ENCODE measurements at regions of chr12 and their contacts with region 1.

Region 1: DNA sequence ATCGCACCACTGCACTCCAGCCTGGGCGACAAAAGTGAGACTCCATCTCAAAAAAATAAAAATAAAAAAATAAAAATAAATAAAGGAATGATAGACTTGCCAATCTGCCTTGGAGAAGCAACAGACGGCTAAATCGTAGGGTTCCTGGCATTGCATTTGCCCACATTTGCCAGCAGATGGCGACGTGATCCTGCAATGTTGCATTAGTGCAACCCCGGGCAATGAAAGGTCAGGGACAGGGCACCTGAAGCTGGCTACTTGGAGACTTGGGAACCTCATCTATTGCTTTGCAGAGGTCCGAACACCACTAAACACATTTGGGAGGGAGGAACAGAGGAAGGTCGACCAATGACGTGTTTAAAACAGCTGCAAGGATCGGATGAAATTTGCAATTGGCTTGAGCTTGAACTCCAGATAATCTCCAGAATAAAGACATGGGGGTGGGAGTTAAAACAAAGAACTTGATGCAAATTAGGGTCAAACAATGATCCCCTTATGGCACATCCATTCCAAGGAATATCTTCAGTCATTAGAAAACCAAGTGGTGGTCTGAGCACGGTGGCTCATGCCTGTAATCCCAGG is 34.6 kb downstream of the SPRING1 start:
- DNase-seq: peak; percentile 26 to 80 (median 68)
- ATAC-seq: peak; percentile 71
- H3K4me3 ChIP-seq: no peak overlapping the region
- H3K4me3 Mint-ChIP-seq: no peak overlapping the region
- H3K27ac ChIP-seq: no peak overlapping the region
- H3K27ac Mint-ChIP-seq: no peak overlapping the region
- H3K4me1 ChIP-seq: no peaks in the 10 kb centered on the region
- H3K4me1 Mint-ChIP-seq: peaks cover 2% of the 10 kb centered on the region
- H3K27me3 ChIP-seq: peaks cover 0 to 2% of the 10 kb centered on the region in 2 experiments
- H3K27me3 Mint-ChIP-seq: peaks cover 6% of the 10 kb centered on the region
- CTCF ChIP-seq: peak; percentile 96

Region 2: GRCh38 chr12:116717466-116718437 is 14.4 kb after region 1 on chr12:
- CTCF ChIA-PET with region 1: interaction called, 21 read pairs
- POLR2A ChIA-PET with region 1: no interaction called
- intact Hi-C with region 1: no loop called
- DNase-seq: no peak
- ATAC-seq: no peak
- H3K4me3 ChIP-seq: no peak overlapping the region
- H3K4me3 Mint-ChIP-seq: no peak overlapping the region
- H3K27ac ChIP-seq: no peak overlapping the region
- H3K27ac Mint-ChIP-seq: no peak overlapping the region
- H3K4me1 ChIP-seq: no peaks in the 10 kb centered on the region
- H3K4me1 Mint-ChIP-seq: peaks cover 3% of the 10 kb centered on the region
- H3K27me3 ChIP-seq: no peaks in the 10 kb centered on the region
- H3K27me3 Mint-ChIP-seq: no peaks in the 10 kb centered on the region
- CTCF ChIP-seq: no peak

Region 3: DNA sequence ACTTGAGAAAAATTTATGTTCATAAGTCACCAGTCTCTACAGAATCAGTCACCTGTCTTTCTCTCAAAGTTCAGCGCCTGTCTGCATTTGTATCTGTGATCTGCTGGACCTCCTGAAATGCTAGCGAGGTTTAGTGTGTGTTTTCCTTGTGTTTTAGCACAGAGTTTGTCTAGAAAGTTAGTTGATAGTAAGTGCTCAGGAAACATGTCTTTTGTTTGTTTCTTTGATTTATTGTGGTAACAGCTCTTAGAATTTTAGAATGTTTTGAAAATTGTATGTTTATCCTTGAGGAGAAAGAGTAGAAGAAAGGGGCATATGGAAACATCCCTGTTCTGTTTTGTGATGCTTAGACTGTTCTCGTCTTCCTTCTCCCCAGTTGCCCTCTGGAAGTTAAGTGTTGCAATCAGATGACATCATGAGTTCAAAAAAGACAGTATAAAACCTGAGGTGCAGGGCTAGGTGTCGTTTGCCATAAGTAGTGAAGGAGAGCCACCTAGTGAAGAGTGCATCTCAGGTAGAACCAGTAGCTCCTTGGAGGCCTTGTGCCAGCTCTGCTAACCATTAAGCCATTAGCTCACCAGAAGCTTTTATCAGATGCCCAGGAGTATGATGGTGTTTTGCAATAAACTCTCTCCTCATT is 252.2 kb after region 1 on chr12:
- CTCF ChIA-PET with region 1: interaction called, 18 read pairs
- POLR2A ChIA-PET with region 1: interaction called, 4 read pairs
- intact Hi-C with region 1: loop called (anchors 1 to 2 kb)
- DNase-seq: peak in 3 of 9 experiments; percentile 9 to 66 (median 52)
- ATAC-seq: no peak
- H3K4me3 ChIP-seq: no peak overlapping the region
- H3K4me3 Mint-ChIP-seq: no peak overlapping the region
- H3K27ac ChIP-seq: no peak overlapping the region
- H3K27ac Mint-ChIP-seq: no peak overlapping the region
- H3K4me1 ChIP-seq: no peaks in the 10 kb centered on the region
- H3K4me1 Mint-ChIP-seq: no peaks in the 10 kb centered on the region
- H3K27me3 ChIP-seq: no peaks in the 10 kb centered on the region
- H3K27me3 Mint-ChIP-seq: no peaks in the 10 kb centered on the region
- CTCF ChIP-seq: no peak

Region 4: DNA sequence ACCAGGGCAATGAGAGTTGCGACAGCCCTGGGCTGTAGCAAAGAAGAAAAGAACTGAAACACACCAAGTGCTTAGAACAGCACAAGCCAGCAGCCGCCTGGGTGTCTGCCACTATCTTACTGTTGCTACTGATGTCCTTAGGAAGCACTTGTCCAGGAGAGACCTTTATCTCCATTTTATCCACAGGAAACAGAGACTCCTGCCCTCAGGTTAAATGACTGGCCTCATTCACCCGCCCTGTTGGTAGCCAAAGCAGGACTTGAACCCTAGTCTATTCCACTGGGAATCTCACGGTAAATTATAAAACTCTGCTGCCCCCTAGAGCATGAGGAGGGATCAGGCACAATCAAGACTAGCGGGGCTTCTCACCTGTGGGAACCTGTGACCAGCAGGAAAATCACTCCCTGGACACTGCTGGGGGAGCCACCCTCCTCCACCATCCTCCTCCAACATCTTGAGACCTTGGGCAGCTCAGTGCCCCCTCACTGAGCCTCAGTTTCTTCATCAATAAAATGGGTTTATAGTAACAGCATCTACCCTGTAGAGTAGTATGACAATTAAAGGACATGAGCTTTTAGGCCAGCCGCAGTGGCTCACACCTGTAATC is 416.4 kb after region 1 on chr12:
- CTCF ChIA-PET with region 1: interaction called, 48 read pairs
- POLR2A ChIA-PET with region 1: no interaction called
- intact Hi-C with region 1: loop called in 1 of 2 experiments (anchors 1 kb)
- DNase-seq: peak in 4 of 9 experiments; percentile 21 to 59 (median 44)
- ATAC-seq: peak; percentile 54
- H3K4me3 ChIP-seq: no peak overlapping the region
- H3K4me3 Mint-ChIP-seq: no peak overlapping the region
- H3K27ac ChIP-seq: no peak overlapping the region
- H3K27ac Mint-ChIP-seq: no peak overlapping the region
- H3K4me1 ChIP-seq: no peaks in the 10 kb centered on the region
- H3K4me1 Mint-ChIP-seq: no peaks in the 10 kb centered on the region
- H3K27me3 ChIP-seq: no peaks in the 10 kb centered on the region
- H3K27me3 Mint-ChIP-seq: no peaks in the 10 kb centered on the region
- CTCF ChIP-seq: peak; percentile 72